ENCODE measurements at regions of chr13 and their contacts with region 1.

Region 1: GRCh38 chr13:60765700-60766411 is 368.8 kb downstream of the TDRD3 start:
- DNase-seq: peak in 1 of 2 experiments; percentile 11
- H3K4me3 ChIP-seq: no peak overlapping the region
- H3K27ac ChIP-seq: no peak overlapping the region
- H3K4me1 ChIP-seq: no peaks in the 10 kb centered on the region
- H3K27me3 ChIP-seq: no peaks in the 10 kb centered on the region
- CTCF ChIP-seq: no peak

Region 2: GRCh38 chr13:60881507-60881906 is 115.7 kb after region 1 on chr13:
- CTCF ChIA-PET with region 1: no interaction called
- POLR2A ChIA-PET with region 1: interaction called, 11 read pairs
- intact Hi-C with region 1: no loop called
- DNase-seq: no peak
- H3K4me3 ChIP-seq: no peak overlapping the region
- H3K27ac ChIP-seq: no peak overlapping the region
- H3K4me1 ChIP-seq: no peaks in the 10 kb centered on the region
- H3K27me3 ChIP-seq: no peaks in the 10 kb centered on the region
- CTCF ChIP-seq: no peak

Measured in PC-9 (cell line).